ENCODE measurements at regions of chr17 and their contacts with region 1.

Region 1: GRCh38 chr17:37609170-37610040 is at the start of gene SYNRG:
- DNase-seq: peak; percentile 92 to 99 (median 96)
- ATAC-seq: peak; percentile 81
- H3K4me3 ChIP-seq: peak within 1 kb of the TSS; percentile 38 to 91
- H3K4me3 Mint-ChIP-seq: peak within 1 kb of the TSS; percentile 93
- H3K27ac ChIP-seq: peak within 1 kb of the TSS; percentile 75 to 88
- H3K27ac Mint-ChIP-seq: peak within 1 kb of the TSS; percentile 95
- H3K4me1 ChIP-seq: peaks cover 39% of the 10 kb centered on the region
- H3K4me1 Mint-ChIP-seq: peaks cover 35% of the 10 kb centered on the region
- H3K27me3 ChIP-seq: no peaks in the 10 kb centered on the region
- H3K27me3 Mint-ChIP-seq: no peaks in the 10 kb centered on the region
- CTCF ChIP-seq: peak; percentile 76
- total RNA-seq, gene SYNRG: 46.4 to 47.0 TPM

Region 2: DNA sequence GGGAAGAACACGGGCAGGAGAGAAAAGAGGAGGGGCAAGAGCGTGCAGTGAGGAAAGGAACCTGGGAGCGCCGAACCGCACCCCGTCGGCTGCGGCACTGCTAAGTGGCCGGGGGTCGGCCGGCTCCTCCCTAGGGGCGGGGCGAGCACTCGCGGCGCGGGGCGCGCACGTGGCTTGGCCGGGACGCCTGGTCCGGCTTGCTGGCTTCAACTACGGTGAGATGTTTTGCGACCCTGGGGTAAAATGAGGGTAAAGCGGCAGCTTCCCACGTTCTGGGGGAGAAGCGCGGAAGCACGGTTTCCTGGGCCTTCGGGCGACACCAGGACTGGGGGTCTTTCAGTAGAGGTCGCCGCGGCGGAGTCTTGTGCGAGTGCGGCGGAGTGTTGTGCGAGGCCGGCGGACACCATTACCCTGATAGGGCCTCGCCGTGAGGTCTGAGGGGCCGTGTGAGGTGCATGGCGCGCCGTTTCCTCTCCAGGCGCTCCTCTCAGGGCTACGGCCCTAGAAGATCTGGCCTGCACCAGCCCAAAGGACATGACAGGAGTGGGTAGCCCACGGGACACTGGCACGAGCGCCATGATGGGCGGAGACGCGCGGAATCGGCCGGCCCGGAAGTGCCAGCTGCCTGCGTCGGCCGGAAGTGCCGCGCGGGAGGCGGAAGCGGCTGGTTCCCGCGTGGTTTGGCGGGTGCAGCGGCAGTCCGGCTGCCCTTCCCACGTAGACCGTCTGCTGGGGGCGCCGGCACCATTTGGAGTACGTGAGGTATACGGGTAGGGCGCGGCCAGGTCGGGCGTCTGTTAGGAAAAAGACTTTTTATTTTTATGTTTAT is 1074.4 kb before region 1 on chr17 and contains the starts of genes MYO19 and PIGW:
- CTCF ChIA-PET with region 1: no interaction called
- POLR2A ChIA-PET with region 1: no interaction called
- intact Hi-C with region 1: loop called (anchors 5 to 10 kb)
- DNase-seq: peak; percentile 66 to 93 (median 83)
- ATAC-seq: peak; percentile 73
- H3K4me3 ChIP-seq: peak within 1 kb of the TSS; percentile 69 to 98
- H3K4me3 Mint-ChIP-seq: peak within 1 kb of the TSS; percentile 98
- H3K27ac ChIP-seq: peak within 1 kb of the TSS; percentile 93 to 98
- H3K27ac Mint-ChIP-seq: peak within 1 kb of the TSS; percentile 97
- H3K4me1 ChIP-seq: peaks cover 11% of the 10 kb centered on the region
- H3K4me1 Mint-ChIP-seq: peaks cover 16% of the 10 kb centered on the region
- H3K27me3 ChIP-seq: no peaks in the 10 kb centered on the region
- H3K27me3 Mint-ChIP-seq: no peaks in the 10 kb centered on the region
- CTCF ChIP-seq: no peak
- total RNA-seq, gene MYO19: 55.9 to 57.7 TPM
- total RNA-seq, gene PIGW: 2.3 to 3.4 TPM

Region 3: DNA sequence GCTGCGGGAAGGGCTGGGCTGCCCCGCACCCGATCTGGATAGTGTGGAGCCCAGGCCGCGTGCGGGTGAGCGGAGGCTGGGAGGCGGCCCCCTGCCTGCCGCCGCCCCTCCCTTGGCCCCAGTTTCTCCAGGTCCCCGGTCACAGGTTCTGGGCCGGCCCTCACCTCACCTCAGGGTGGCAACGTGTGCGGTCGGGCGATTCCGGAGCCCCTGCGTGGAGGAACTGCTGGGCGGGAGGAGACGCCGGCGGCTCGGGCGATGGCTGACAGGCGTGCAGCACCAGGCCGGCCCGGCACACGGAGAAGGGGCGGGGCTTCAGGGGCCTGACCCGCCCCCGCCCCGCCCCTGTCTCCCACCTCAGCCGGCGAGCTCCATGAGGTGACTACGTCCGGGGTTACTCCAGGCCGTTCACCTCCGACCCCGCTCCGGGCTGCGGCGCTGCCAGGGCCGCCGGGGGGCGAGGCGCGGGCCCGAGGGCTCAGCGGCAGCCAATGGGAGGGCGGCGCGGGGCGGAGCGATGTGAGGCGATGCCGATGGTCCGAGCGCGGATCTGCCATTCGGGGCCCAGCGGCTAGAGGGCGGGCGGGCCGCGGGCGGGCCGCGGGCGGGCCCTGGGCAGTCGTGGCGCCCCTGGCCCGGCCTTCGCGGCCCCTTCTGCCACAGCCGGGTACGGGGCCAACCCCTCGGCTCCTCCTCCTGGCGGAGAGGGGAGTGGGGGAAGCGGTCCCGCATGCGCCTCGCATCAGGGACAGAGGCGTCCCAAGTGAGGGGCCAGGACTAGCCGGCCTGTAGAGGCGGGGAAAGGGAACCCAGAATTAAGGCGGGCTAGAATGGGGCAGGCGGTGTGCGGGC is 250.3 kb before region 1 on chr17:
- CTCF ChIA-PET with region 1: no interaction called
- POLR2A ChIA-PET with region 1: no interaction called
- intact Hi-C with region 1: loop called in 1 of 2 experiments (anchors 1 kb)
- DNase-seq: peak; percentile 77 to 97 (median 88)
- ATAC-seq: peak; percentile 95
- H3K4me3 ChIP-seq: peak overlapping the region; percentile 78 to 98
- H3K4me3 Mint-ChIP-seq: peak overlapping the region; percentile 87
- H3K27ac ChIP-seq: peak overlapping the region; percentile 66 to 82
- H3K27ac Mint-ChIP-seq: peak overlapping the region; percentile 87
- H3K4me1 ChIP-seq: peaks cover 16% of the 10 kb centered on the region
- H3K4me1 Mint-ChIP-seq: peaks cover 18% of the 10 kb centered on the region
- H3K27me3 ChIP-seq: no peaks in the 10 kb centered on the region
- H3K27me3 Mint-ChIP-seq: no peaks in the 10 kb centered on the region
- CTCF ChIP-seq: no peak

Region 4: GRCh38 chr17:37438141-37438540 is 171.3 kb before region 1 on chr17:
- CTCF ChIA-PET with region 1: no interaction called
- POLR2A ChIA-PET with region 1: no interaction called
- intact Hi-C with region 1: no loop called
- DNase-seq: no peak
- ATAC-seq: no peak
- H3K4me3 ChIP-seq: no peak overlapping the region
- H3K4me3 Mint-ChIP-seq: no peak overlapping the region
- H3K27ac ChIP-seq: no peak overlapping the region
- H3K27ac Mint-ChIP-seq: no peak overlapping the region
- H3K4me1 ChIP-seq: no peaks in the 10 kb centered on the region
- H3K4me1 Mint-ChIP-seq: no peaks in the 10 kb centered on the region
- H3K27me3 ChIP-seq: no peaks in the 10 kb centered on the region
- H3K27me3 Mint-ChIP-seq: no peaks in the 10 kb centered on the region
- CTCF ChIP-seq: no peak

Region 5: DNA sequence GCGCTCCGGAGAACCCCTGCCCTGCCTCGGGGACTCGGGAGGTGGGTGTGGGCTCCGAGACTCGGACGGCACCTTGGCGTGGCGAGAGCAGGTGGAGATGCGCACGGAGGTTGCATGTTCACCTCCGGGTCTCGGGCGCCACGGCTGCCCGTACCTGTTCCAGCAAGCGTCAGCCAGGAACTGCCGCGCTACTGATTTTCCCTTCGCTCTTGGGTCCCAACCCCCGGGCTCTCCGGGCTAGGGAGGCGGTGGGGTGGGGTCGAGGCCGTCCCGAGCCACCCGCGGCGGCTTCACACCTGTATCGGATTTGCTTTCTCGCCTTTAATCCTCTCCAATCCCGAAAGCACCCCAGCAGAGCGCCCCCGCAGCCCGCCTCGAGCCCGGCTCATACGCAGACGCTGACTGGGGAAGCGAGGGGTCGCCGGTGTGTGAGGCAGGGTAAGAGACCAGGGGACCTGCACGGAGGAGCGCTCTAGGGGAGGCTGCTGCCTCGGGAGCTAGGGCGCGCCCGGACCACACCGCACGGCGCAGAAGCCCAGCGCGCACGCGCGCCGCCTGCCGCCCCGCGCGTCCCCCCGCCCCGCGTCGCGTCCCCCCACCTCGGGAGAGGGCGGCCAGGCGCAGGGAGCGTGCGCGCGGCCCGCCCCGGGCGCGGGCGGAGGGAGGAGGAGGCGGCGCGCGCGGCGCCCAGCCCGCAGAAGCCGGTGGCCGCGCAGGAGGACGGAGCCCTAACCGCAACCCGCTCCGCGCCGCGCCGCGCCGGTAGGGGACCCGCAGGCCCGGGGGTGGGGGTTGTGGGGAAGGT is 120.0 kb before region 1 on chr17 and contains the start of gene DUSP14:
- CTCF ChIA-PET with region 1: interaction called, 3 read pairs
- POLR2A ChIA-PET with region 1: interaction called, 6 read pairs
- intact Hi-C with region 1: loop called (anchors 1 kb)
- DNase-seq: peak; percentile 68 to 95 (median 84)
- ATAC-seq: peak; percentile 80
- H3K4me3 ChIP-seq: peak within 1 kb of the TSS; percentile 75 to 98
- H3K4me3 Mint-ChIP-seq: peak within 1 kb of the TSS; percentile 90
- H3K27ac ChIP-seq: peak within 1 kb of the TSS; percentile 72 to 81
- H3K27ac Mint-ChIP-seq: peak within 1 kb of the TSS; percentile 93
- H3K4me1 ChIP-seq: peaks cover 26% of the 10 kb centered on the region
- H3K4me1 Mint-ChIP-seq: peaks cover 27% of the 10 kb centered on the region
- H3K27me3 ChIP-seq: no peaks in the 10 kb centered on the region
- H3K27me3 Mint-ChIP-seq: no peaks in the 10 kb centered on the region
- CTCF ChIP-seq: no peak
- total RNA-seq, gene DUSP14: 5.5 to 6.8 TPM

Region 6: DNA sequence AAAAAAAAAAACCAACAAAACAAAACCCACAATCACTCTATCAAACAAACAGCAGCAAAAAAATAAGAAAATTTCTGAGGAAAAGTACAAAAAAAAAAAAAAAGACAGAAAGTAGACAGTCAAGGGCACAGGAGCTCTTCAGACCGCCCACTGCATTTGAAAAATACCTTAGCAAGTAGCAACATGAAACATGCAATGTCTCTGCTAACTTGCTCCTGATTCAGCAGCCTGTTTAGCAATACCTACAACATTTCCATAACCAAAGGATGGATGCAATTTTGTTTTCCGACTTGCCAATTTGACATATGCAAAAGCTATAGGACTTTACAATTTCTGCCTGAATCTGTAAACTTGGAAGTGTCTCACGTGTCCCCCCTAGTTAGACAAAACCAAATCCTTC is 57.6 kb before region 1 on chr17:
- CTCF ChIA-PET with region 1: interaction called, 11 read pairs
- POLR2A ChIA-PET with region 1: no interaction called
- intact Hi-C with region 1: no loop called
- DNase-seq: no peak
- ATAC-seq: no peak
- H3K4me3 ChIP-seq: no peak overlapping the region
- H3K4me3 Mint-ChIP-seq: peak overlapping the region; percentile 26
- H3K27ac ChIP-seq: no peak overlapping the region
- H3K27ac Mint-ChIP-seq: peak overlapping the region; percentile 85
- H3K4me1 ChIP-seq: peaks cover 58% of the 10 kb centered on the region
- H3K4me1 Mint-ChIP-seq: peaks cover 70% of the 10 kb centered on the region
- H3K27me3 ChIP-seq: no peaks in the 10 kb centered on the region
- H3K27me3 Mint-ChIP-seq: no peaks in the 10 kb centered on the region
- CTCF ChIP-seq: no peak

Region 7: GRCh38 chr17:37643118-37643766 is 33.8 kb after region 1 on chr17 and contains the start of gene DDX52:
- CTCF ChIA-PET with region 1: interaction called, 5 read pairs
- POLR2A ChIA-PET with region 1: no interaction called
- intact Hi-C with region 1: loop called (anchors 1 kb)
- DNase-seq: peak; percentile 79 to 95 (median 86)
- ATAC-seq: peak; percentile 99
- H3K4me3 ChIP-seq: peak within 1 kb of the TSS; percentile 78 to 96
- H3K4me3 Mint-ChIP-seq: peak within 1 kb of the TSS; percentile 94
- H3K27ac ChIP-seq: peak within 1 kb of the TSS; percentile 77 to 89
- H3K27ac Mint-ChIP-seq: peak within 1 kb of the TSS; percentile 94
- H3K4me1 ChIP-seq: peaks cover 20% of the 10 kb centered on the region
- H3K4me1 Mint-ChIP-seq: peaks cover 44% of the 10 kb centered on the region
- H3K27me3 ChIP-seq: no peaks in the 10 kb centered on the region
- H3K27me3 Mint-ChIP-seq: peaks cover 27% of the 10 kb centered on the region
- CTCF ChIP-seq: no peak
- total RNA-seq, gene DDX52: 33.6 to 35.1 TPM